Naive thymus-derived CD4-positive, alpha-beta T cell (primary cell): ENCODE measurements at regions of chr6 and their contacts with region 1.

Region 1: DNA sequence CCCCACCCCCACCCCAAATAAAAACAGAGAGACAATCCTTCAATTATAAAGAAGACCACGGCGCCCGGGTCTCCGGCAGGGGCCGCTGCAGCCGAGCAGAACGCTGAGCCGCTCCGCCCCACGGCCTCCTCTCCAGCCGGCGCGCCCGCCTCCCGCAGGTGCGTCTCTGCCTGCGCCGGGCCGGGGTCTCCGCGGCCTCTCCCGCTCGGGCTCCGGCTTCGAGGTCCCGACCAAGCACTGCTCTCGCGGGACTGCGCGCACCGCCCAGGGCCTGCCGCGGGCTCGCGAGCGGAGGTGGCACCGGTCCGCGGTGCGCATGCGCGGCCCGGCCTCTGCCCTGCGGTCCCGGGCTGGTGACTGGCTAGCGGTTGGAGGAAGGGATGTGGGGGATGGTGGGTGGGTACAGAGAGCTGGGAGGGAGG is 241 bp upstream of the SIRT5 start:
- DNase-seq: peak; percentile 91 to 96 (median 94)
- ATAC-seq: peak; percentile 89
- H3K4me3 ChIP-seq: peak overlapping the region; percentile 93
- H3K4me3 Mint-ChIP-seq: peak overlapping the region; percentile 88 to 99 (median 95)
- H3K27ac ChIP-seq: peak overlapping the region; percentile 80
- H3K27ac Mint-ChIP-seq: peak overlapping the region; percentile 88 to 99 (median 95)
- H3K4me1 ChIP-seq: peaks cover 5 to 13% of the 10 kb centered on the region in 2 donors
- H3K4me1 Mint-ChIP-seq: peaks cover 10 to 44% (median 28%) of the 10 kb centered on the region in 7 donors
- H3K27me3 ChIP-seq: no peaks in the 10 kb centered on the region
- H3K27me3 Mint-ChIP-seq: no peaks in the 10 kb centered on the region

Region 2: GRCh38 chr6:13355043-13355951 is 218.9 kb before region 1 on chr6:
- CTCF ChIA-PET with region 1: no interaction called
- POLR2A ChIA-PET with region 1: no interaction called
- intact Hi-C with region 1: loop called (anchors 1 kb)
- DNase-seq: peak in 8 of 9 donors; percentile 10 to 42 (median 30)
- ATAC-seq: peak; percentile 75
- H3K4me3 ChIP-seq: peak overlapping the region; percentile 22
- H3K4me3 Mint-ChIP-seq: peak overlapping the region; percentile 78 to 91 (median 80)
- H3K27ac ChIP-seq: peak overlapping the region; percentile 46
- H3K27ac Mint-ChIP-seq: peak overlapping the region; percentile 71 to 98 (median 85)
- H3K4me1 ChIP-seq: peaks cover 27 to 32% of the 10 kb centered on the region in 2 donors
- H3K4me1 Mint-ChIP-seq: peaks cover 33 to 56% (median 46%) of the 10 kb centered on the region in 7 donors
- H3K27me3 ChIP-seq: no peaks in the 10 kb centered on the region
- H3K27me3 Mint-ChIP-seq: no peaks in the 10 kb centered on the region

Region 3: GRCh38 chr6:13487122-13488014 is 86.8 kb before region 1 on chr6 and contains the start of gene GFOD1:
- CTCF ChIA-PET with region 1: interaction called, 4 read pairs
- POLR2A ChIA-PET with region 1: interaction called, 5 read pairs
- intact Hi-C with region 1: loop called (anchors 1 kb)
- DNase-seq: peak; percentile 33 to 87 (median 54)
- ATAC-seq: peak; percentile 90
- H3K4me3 ChIP-seq: peak within 1 kb of the TSS; percentile 80
- H3K4me3 Mint-ChIP-seq: peak within 1 kb of the TSS; percentile 78 to 96 (median 92)
- H3K27ac ChIP-seq: peak within 1 kb of the TSS; percentile 23
- H3K27ac Mint-ChIP-seq: peak within 1 kb of the TSS in 7 of 9 donors; percentile 35 to 76 (median 65)
- H3K4me1 ChIP-seq: peaks cover 4 to 9% of the 10 kb centered on the region in 2 donors
- H3K4me1 Mint-ChIP-seq: peaks cover 23 to 40% (median 30%) of the 10 kb centered on the region in 7 donors
- H3K27me3 ChIP-seq: no peaks in the 10 kb centered on the region
- H3K27me3 Mint-ChIP-seq: peaks cover 0 to 14% (median 12%) of the 10 kb centered on the region in 5 donors
- total RNA-seq, gene GFOD1: 0.73 to 10.8 (median 2.0) TPM

Region 4: DNA sequence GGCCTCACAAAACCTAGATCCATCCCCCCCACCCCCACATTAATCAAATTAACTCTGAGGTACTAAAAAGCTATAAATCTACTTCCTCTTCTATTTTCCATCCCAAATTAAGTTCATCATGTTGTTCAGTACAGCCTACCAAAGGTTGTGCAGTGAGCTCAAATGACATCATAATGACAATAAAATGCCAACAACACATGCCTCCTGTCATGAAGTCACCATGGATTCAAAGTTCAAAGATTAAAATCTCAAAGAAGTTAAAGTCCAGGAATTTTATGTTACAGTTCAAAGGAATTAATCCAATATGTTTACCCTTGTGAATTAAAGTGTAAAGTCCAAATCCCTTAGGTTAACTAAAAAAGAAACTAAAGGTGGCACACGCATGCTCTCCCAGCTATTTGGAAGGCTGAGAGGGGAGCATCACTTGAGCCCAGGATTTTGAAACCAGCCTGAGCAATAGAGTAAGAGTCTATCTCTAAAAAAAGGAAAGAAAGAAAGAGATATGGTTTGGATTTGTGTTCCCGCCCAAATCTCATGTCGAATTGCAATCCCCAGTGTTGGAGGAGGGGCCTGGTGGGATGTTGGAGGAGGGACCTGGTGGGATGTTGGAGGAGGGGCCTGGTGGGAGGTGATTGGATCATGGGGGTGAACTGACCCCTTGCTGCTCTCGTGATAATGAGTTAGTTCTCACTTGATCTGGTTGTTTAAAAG is 25.5 kb before region 1 on chr6:
- CTCF ChIA-PET with region 1: no interaction called
- POLR2A ChIA-PET with region 1: no interaction called
- intact Hi-C with region 1: no loop called
- DNase-seq: no peak
- ATAC-seq: no peak
- H3K4me3 ChIP-seq: no peak overlapping the region
- H3K4me3 Mint-ChIP-seq: no peak overlapping the region
- H3K27ac ChIP-seq: no peak overlapping the region
- H3K27ac Mint-ChIP-seq: no peak overlapping the region
- H3K4me1 ChIP-seq: no peaks in the 10 kb centered on the region
- H3K4me1 Mint-ChIP-seq: peaks cover 0 to 3% (median 0%) of the 10 kb centered on the region in 7 donors
- H3K27me3 ChIP-seq: no peaks in the 10 kb centered on the region
- H3K27me3 Mint-ChIP-seq: peaks cover 0 to 18% (median 0%) of the 10 kb centered on the region in 5 donors

Region 5: GRCh38 chr6:13711733-13712598 is 137.8 kb after region 1 on chr6 and contains the start of gene RANBP9:
- CTCF ChIA-PET with region 1: interaction called, 4 read pairs
- POLR2A ChIA-PET with region 1: interaction called, 22 read pairs
- intact Hi-C with region 1: loop called (anchors 1 kb)
- DNase-seq: peak; percentile 86 to 92 (median 90)
- ATAC-seq: peak; percentile 90
- H3K4me3 ChIP-seq: peak within 1 kb of the TSS; percentile 85
- H3K4me3 Mint-ChIP-seq: peak within 1 kb of the TSS; percentile 91 to 100 (median 98)
- H3K27ac ChIP-seq: peak within 1 kb of the TSS; percentile 94
- H3K27ac Mint-ChIP-seq: peak within 1 kb of the TSS; percentile 93 to 99 (median 98)
- H3K4me1 ChIP-seq: peaks cover 12 to 15% of the 10 kb centered on the region in 2 donors
- H3K4me1 Mint-ChIP-seq: peaks cover 31 to 58% (median 45%) of the 10 kb centered on the region in 7 donors
- H3K27me3 ChIP-seq: no peaks in the 10 kb centered on the region
- H3K27me3 Mint-ChIP-seq: no peaks in the 10 kb centered on the region
- total RNA-seq, gene RANBP9: 45.4 to 56.9 (median 49.2) TPM

Region 6: GRCh38 chr6:13814176-13814937 is 240.2 kb after region 1 on chr6 and contains the start of gene MCUR1:
- CTCF ChIA-PET with region 1: interaction called, 3 read pairs
- POLR2A ChIA-PET with region 1: interaction called, 3 read pairs
- intact Hi-C with region 1: loop called (anchors 1 kb)
- DNase-seq: peak; percentile 69 to 87 (median 76)
- ATAC-seq: peak; percentile 91
- H3K4me3 ChIP-seq: peak within 1 kb of the TSS; percentile 71
- H3K4me3 Mint-ChIP-seq: peak within 1 kb of the TSS; percentile 87 to 92 (median 90)
- H3K27ac ChIP-seq: peak within 1 kb of the TSS; percentile 82
- H3K27ac Mint-ChIP-seq: peak within 1 kb of the TSS; percentile 60 to 93 (median 85)
- H3K4me1 ChIP-seq: peaks cover 0 to 13% of the 10 kb centered on the region in 2 donors
- H3K4me1 Mint-ChIP-seq: peaks cover 17 to 40% (median 38%) of the 10 kb centered on the region in 7 donors
- H3K27me3 ChIP-seq: no peaks in the 10 kb centered on the region
- H3K27me3 Mint-ChIP-seq: peaks cover 0 to 25% (median 0%) of the 10 kb centered on the region in 5 donors
- total RNA-seq, gene MCUR1: 5.7 to 20.6 (median 10.0) TPM

Region 7: GRCh38 chr6:14117158-14118090 is 543.3 kb after region 1 on chr6 and contains the start of gene CD83:
- CTCF ChIA-PET with region 1: no interaction called
- POLR2A ChIA-PET with region 1: no interaction called
- intact Hi-C with region 1: loop called in 1 of 2 experiments (anchors 1 kb)
- DNase-seq: peak; percentile 79 to 89 (median 84)
- ATAC-seq: peak; percentile 94
- H3K4me3 ChIP-seq: peak within 1 kb of the TSS; percentile 91
- H3K4me3 Mint-ChIP-seq: peak within 1 kb of the TSS; percentile 87 to 97 (median 93)
- H3K27ac ChIP-seq: peak within 1 kb of the TSS; percentile 87
- H3K27ac Mint-ChIP-seq: peak within 1 kb of the TSS; percentile 91 to 96 (median 94)
- H3K4me1 ChIP-seq: peaks cover 11 to 15% of the 10 kb centered on the region in 2 donors
- H3K4me1 Mint-ChIP-seq: peaks cover 18 to 41% (median 28%) of the 10 kb centered on the region in 7 donors
- H3K27me3 ChIP-seq: no peaks in the 10 kb centered on the region
- H3K27me3 Mint-ChIP-seq: peaks cover 0 to 35% (median 0%) of the 10 kb centered on the region in 5 donors
- total RNA-seq, gene CD83: 5.0 to 113 (median 18.3) TPM

Region 8: GRCh38 chr6:15179302-15179701 is 1605.1 kb after region 1 on chr6:
- CTCF ChIA-PET with region 1: no interaction called
- POLR2A ChIA-PET with region 1: no interaction called
- intact Hi-C with region 1: no loop called
- DNase-seq: no peak
- ATAC-seq: no peak
- H3K4me3 ChIP-seq: no peak overlapping the region
- H3K4me3 Mint-ChIP-seq: no peak overlapping the region
- H3K27ac ChIP-seq: no peak overlapping the region
- H3K27ac Mint-ChIP-seq: peak overlapping the region in 1 of 9 donors; percentile 81
- H3K4me1 ChIP-seq: no peaks in the 10 kb centered on the region
- H3K4me1 Mint-ChIP-seq: peaks cover 0 to 7% (median 6%) of the 10 kb centered on the region in 7 donors
- H3K27me3 ChIP-seq: no peaks in the 10 kb centered on the region
- H3K27me3 Mint-ChIP-seq: no peaks in the 10 kb centered on the region